ENCODE measurements at regions of chr15 and their contacts with region 1.

Region 1: GRCh38 chr15:39301589-39301999 is 279.3 kb upstream of the THBS1 start:
- DNase-seq: no peak
- ATAC-seq: peak in 1 of 4 donors; percentile 42
- H3K4me3 ChIP-seq: no peak overlapping the region
- H3K27ac ChIP-seq: no peak overlapping the region
- H3K4me1 ChIP-seq: peaks cover 0 to 3% (median 0%) of the 10 kb centered on the region in 12 donors
- H3K27me3 ChIP-seq: no peaks in the 10 kb centered on the region
- CTCF ChIP-seq: no peak
- POLR2A ChIP-seq: no peak

Region 2: GRCh38 chr15:39232512-39232911 is 69.1 kb before region 1 on chr15:
- intact Hi-C with region 1: loop called in 1 of 10 experiments (anchors 10 kb)
- DNase-seq: no peak
- ATAC-seq: no peak
- H3K4me3 ChIP-seq: no peak overlapping the region
- H3K27ac ChIP-seq: no peak overlapping the region
- H3K4me1 ChIP-seq: peaks cover 0 to 9% (median 0%) of the 10 kb centered on the region in 12 donors
- H3K27me3 ChIP-seq: no peaks in the 10 kb centered on the region
- CTCF ChIP-seq: no peak
- POLR2A ChIP-seq: no peak

Region 3: DNA sequence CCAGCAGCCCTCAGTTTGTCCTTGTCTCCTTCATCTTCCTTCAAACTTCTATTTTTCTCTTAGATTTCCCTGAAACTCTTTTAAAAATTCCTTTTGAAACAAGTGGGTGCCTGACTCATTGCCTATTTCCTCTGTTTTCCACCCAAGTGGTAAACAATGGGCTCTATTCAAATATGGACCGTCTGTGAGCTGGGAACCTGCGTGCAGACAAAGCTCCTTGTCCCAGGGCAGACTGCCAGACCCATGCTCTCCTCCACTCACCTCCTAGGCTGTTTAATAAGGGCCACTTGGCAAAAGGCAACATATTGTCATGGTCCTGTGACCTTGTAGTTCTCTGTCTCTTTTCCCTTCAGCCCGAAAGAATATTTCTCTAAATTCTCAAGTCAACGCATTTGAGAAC is 53.4 kb before region 1 on chr15:
- intact Hi-C with region 1: no loop called
- DNase-seq: peak; percentile 51 to 68 (median 62)
- ATAC-seq: peak; percentile 55 to 91 (median 78)
- H3K4me3 ChIP-seq: no peak overlapping the region
- H3K27ac ChIP-seq: peak overlapping the region in 9 of 12 donors; percentile 3 to 51 (median 30)
- H3K4me1 ChIP-seq: peaks cover 0 to 12% (median 2%) of the 10 kb centered on the region in 12 donors
- H3K27me3 ChIP-seq: no peaks in the 10 kb centered on the region
- CTCF ChIP-seq: no peak
- POLR2A ChIP-seq: no peak

Measured in heart left ventricle (tissue), 16 donors.